ENCODE measurements at regions of chr12 and their contacts with region 1.

Region 1: GRCh38 chr12:50038336-50038735 is 13.0 kb upstream of the RACGAP1 start:
- DNase-seq: no peak
- H3K4me3 ChIP-seq: no peak overlapping the region
- H3K27ac ChIP-seq: no peak overlapping the region
- H3K4me1 ChIP-seq: peaks cover 0 to 3% of the 10 kb centered on the region in 2 experiments; a peak in 1 of 4 replicates
- H3K27me3 ChIP-seq: no peaks in the 10 kb centered on the region
- CTCF ChIP-seq: no peak
- EP300 ChIP-seq: no peak
- RAD21 ChIP-seq: no peak

Region 2: DNA sequence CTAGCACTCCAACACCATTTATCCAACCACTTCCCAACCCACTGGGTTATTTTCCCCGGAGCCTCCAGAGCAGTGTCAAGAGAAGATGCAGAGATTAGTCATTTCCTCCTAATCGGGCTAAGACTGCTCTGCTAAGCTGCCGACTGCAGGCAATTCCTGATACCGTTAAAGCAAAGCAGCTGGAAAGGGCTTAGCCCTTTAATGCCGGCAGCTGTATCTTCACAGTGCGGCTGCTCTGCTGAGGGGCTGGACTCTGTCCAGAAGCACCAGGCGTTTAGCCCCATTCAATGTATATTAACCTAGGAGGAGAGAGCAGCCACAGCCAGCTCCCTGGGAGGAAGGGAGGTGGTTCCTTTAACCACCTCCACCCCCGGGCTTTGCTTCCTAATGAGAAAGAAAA is 54.4 kb before region 1 on chr12:
- CTCF ChIA-PET with region 1: interaction called, 31 read pairs
- POLR2A ChIA-PET with region 1: interaction called, 5 read pairs
- DNase-seq: peak; percentile 62
- H3K4me3 ChIP-seq: no peak overlapping the region
- H3K27ac ChIP-seq: peak overlapping the region; percentile 70 to 99
- H3K4me1 ChIP-seq: peaks cover 20 to 80% of the 10 kb centered on the region in 2 experiments
- H3K27me3 ChIP-seq: no peaks in the 10 kb centered on the region
- CTCF ChIP-seq: no peak
- EP300 ChIP-seq: peak in 1 of 2 experiments; percentile 87; a peak in 2 of 4 replicates
- RAD21 ChIP-seq: peak; percentile 24

Region 3: DNA sequence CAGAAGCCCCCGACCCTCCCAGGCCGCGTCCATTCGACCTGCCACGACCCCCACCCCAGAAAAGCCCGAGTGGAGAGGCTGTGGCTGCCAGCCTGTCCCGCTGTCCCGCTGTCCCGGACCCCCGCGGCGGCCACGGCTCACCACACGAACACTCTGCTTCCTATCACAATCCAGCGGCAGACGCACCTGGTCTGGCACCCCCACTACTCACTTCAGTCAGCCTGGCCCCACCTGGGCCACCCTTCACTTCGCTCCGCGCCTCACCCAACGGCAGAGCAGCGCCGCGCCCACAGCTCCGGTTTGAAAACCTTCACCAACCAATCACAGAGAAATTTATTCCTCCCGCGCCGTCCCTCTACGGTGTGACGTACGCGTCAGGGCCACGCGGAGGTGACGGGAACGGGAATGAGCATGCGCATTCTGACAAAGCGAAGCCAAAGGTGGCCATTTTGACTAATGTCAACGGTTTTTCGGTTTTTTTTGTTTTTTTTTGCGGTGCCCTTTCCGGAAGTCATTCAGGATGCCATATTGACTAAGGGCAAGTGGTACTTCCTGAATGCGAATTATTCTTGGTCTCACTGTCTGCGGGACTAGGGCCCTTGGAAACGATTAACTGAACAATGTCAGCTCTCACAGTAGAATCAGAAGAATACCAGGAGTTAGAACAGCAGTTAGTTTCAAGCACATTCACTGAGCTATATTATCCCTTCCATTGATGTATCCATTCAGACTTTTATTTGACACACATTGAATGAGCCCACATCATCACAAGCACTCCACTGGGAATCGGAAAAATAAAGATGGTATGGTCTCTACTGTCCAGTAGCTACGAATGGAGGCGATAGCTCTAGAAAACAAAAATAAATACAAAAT is 12.9 kb before region 1 on chr12 and contains the start of gene RACGAP1:
- CTCF ChIA-PET with region 1: interaction called, 25 read pairs
- POLR2A ChIA-PET with region 1: no interaction called
- DNase-seq: peak; percentile 96
- H3K4me3 ChIP-seq: peak within 1 kb of the TSS; percentile 67 to 73
- H3K27ac ChIP-seq: peak within 1 kb of the TSS; percentile 40 to 86; a peak in 3 of 4 replicates
- H3K4me1 ChIP-seq: peaks cover 0 to 2% of the 10 kb centered on the region in 2 experiments; a peak in 3 of 4 replicates
- H3K27me3 ChIP-seq: no peaks in the 10 kb centered on the region
- CTCF ChIP-seq: no peak
- EP300 ChIP-seq: peak in 1 of 2 experiments; percentile 47; a peak in 1 of 4 replicates
- RAD21 ChIP-seq: no peak; the same call in 1 of the 2 replicates
- polyA plus RNA-seq, gene RACGAP1: 21.5 and 23.4 TPM in 2 replicates

Region 4: GRCh38 chr12:50055831-50056638 is 17.7 kb after region 1 on chr12:
- CTCF ChIA-PET with region 1: interaction called, 105 read pairs
- POLR2A ChIA-PET with region 1: no interaction called
- DNase-seq: peak; percentile 86
- H3K4me3 ChIP-seq: no peak overlapping the region; a peak in 1 of 4 replicates
- H3K27ac ChIP-seq: no peak overlapping the region
- H3K4me1 ChIP-seq: peaks cover 7 to 29% of the 10 kb centered on the region in 2 experiments; a peak in 2 of 4 replicates
- H3K27me3 ChIP-seq: peaks cover 7% of the 10 kb centered on the region
- CTCF ChIP-seq: peak; percentile 97
- EP300 ChIP-seq: no peak
- RAD21 ChIP-seq: peak; percentile 88